GM12878 (cell line): ENCODE measurements at regions of chr11 and their contacts with region 1.

Region 1: DNA sequence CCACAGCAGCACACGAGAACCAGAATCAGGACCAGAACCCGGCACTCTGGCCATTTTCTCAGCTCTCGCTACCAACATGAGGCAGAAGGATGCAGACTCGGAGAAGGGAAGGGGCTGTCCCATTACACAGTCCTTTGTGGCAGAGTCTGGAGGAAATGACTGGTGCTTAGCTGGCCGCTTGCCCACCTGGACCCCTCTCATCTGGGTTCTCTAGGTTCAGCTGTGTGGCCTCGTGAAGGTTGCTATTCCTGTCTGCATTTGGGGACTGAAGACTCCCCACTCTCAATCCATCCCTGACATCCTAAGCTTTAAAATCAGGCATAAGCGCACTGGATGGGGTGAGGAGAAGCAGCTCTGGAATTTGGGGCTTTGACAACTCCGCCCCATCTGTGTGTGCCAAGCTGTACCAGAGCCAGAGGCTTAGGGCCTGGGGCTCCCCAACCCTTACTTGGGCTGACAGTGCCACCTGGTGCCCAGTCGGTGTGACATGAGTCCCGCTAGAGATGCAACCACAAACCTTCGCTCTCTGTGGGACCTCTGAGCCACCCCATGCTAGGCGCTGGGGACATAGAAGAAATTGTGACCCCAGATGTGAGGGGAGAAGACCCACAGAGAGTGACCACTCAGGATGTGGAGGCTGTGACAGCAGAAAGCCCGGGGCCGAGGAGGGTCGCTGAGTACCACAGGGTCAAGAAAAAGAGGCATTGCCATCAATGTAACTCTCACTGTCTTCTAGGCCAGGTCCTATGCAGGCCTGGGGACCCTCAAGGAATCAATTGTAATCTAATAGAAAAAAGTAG is 35.9 kb upstream of the FCHSD2 start:
- DNase-seq: peak; percentile 68
- ATAC-seq: peak; percentile 99
- H3K4me3 ChIP-seq: no peak overlapping the region
- H3K27ac ChIP-seq: peak overlapping the region; percentile 0
- H3K4me1 ChIP-seq: peaks cover 44% of the 10 kb centered on the region
- H3K27me3 ChIP-seq: no peaks in the 10 kb centered on the region
- CTCF ChIP-seq: peak; percentile 82 to 95 (median 91)
- EP300 ChIP-seq: no peak
- POLR2A ChIP-seq: no peak
- RAD21 ChIP-seq: peak; percentile 99

Region 2: GRCh38 chr11:72573072-72573854 is 604.7 kb before region 1 on chr11:
- CTCF ChIA-PET with region 1: no interaction called
- POLR2A ChIA-PET with region 1: no interaction called
- RAD21 ChIA-PET with region 1: no interaction called
- SMC1A ChIA-PET with region 1: no interaction called
- in situ Hi-C with region 1: no loop called
- intact Hi-C with region 1: no loop called
- DNase-seq: no peak
- ATAC-seq: peak; percentile 97
- H3K4me3 ChIP-seq: no peak overlapping the region
- H3K27ac ChIP-seq: no peak overlapping the region
- H3K4me1 ChIP-seq: no peaks in the 10 kb centered on the region
- H3K27me3 ChIP-seq: peaks cover 3% of the 10 kb centered on the region in 2 experiments; a peak in 3 of 4 replicates
- CTCF ChIP-seq: peak; percentile 40 to 82 (median 58)
- EP300 ChIP-seq: no peak
- POLR2A ChIP-seq: no peak
- RAD21 ChIP-seq: peak; percentile 68

Region 3: DNA sequence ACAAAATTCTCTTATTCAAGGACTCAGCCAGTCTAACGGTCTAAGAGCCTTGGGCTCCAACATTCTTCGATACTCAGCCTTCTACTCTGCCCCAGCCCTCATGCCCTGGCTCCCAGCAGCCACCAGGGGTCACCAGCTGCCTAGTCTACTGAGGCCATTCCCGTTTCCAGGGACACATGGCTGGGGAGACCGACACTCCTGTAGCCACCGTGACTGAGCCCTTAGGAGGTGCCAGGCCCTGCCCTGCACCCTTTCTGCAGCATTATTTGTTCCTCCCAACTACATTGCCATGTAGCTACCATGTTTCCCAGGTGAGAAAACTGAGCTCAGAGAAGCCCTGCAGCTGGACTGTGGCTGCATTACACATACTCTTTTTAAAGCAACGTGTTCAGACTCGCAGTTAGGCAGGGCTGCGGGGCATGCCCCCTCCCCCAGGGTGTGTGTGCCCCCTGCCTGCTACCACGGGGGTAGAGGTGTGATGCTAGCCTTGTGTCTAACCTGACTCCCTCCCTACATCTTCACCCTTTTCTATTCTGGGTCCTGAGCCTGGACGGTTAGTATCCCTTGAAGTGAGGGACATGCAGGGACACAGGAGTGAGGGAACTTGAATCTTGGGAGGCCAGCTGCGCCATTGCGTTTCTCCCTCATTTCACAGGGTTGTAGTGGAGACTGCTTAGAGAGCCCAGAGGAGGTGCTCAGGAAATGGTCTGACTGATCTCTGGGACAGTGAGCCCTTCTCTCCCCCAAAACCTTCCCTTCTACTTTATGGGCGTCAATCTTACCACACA is 346.3 kb before region 1 on chr11:
- CTCF ChIA-PET with region 1: interaction called, 128 read pairs
- POLR2A ChIA-PET with region 1: interaction called, 4 read pairs
- RAD21 ChIA-PET with region 1: interaction called, 51 read pairs
- SMC1A ChIA-PET with region 1: interaction called, 65 read pairs
- in situ Hi-C with region 1: loop called (anchors 25 kb)
- intact Hi-C with region 1: loop called (anchors 1 kb)
- DNase-seq: no peak
- ATAC-seq: peak; percentile 83
- H3K4me3 ChIP-seq: no peak overlapping the region
- H3K27ac ChIP-seq: no peak overlapping the region
- H3K4me1 ChIP-seq: peaks cover 8% of the 10 kb centered on the region
- H3K27me3 ChIP-seq: no peaks in the 10 kb centered on the region
- CTCF ChIP-seq: peak; percentile 77 to 85 (median 85); a peak in 5 of 6 replicates
- EP300 ChIP-seq: no peak
- POLR2A ChIP-seq: peak; percentile 69
- RAD21 ChIP-seq: peak; percentile 81

Region 4: GRCh38 chr11:72890881-72891280 is 287.1 kb before region 1 on chr11:
- CTCF ChIA-PET with region 1: interaction called, 5 read pairs
- POLR2A ChIA-PET with region 1: no interaction called
- RAD21 ChIA-PET with region 1: interaction called, 6 read pairs
- SMC1A ChIA-PET with region 1: interaction called, 20 read pairs
- in situ Hi-C with region 1: no loop called
- intact Hi-C with region 1: no loop called
- DNase-seq: no peak
- ATAC-seq: no peak
- H3K4me3 ChIP-seq: no peak overlapping the region
- H3K27ac ChIP-seq: no peak overlapping the region
- H3K4me1 ChIP-seq: no peaks in the 10 kb centered on the region
- H3K27me3 ChIP-seq: no peaks in the 10 kb centered on the region
- CTCF ChIP-seq: no peak
- EP300 ChIP-seq: no peak
- POLR2A ChIP-seq: no peak
- RAD21 ChIP-seq: no peak

Region 5: GRCh38 chr11:73047773-73048371 is 130.1 kb before region 1 on chr11:
- CTCF ChIA-PET with region 1: interaction called, 15 read pairs
- POLR2A ChIA-PET with region 1: interaction called, 4 read pairs
- RAD21 ChIA-PET with region 1: interaction called, 5 read pairs
- SMC1A ChIA-PET with region 1: interaction called, 6 read pairs
- in situ Hi-C with region 1: no loop called
- intact Hi-C with region 1: no loop called
- DNase-seq: peak; percentile 88
- ATAC-seq: peak; percentile 89
- H3K4me3 ChIP-seq: peak overlapping the region; percentile 40; the same call in 1 of the 2 replicates
- H3K27ac ChIP-seq: peak overlapping the region; percentile 95
- H3K4me1 ChIP-seq: peaks cover 44% of the 10 kb centered on the region
- H3K27me3 ChIP-seq: no peaks in the 10 kb centered on the region
- CTCF ChIP-seq: no peak
- EP300 ChIP-seq: peak; percentile 11 to 70; a peak in 1 of 4 replicates
- POLR2A ChIP-seq: 0 out of 2 replicates have a peak, but pooled peaks have one; percentile 29
- RAD21 ChIP-seq: 0 out of 2 replicates have a peak, but pooled peaks have one; percentile 7

Region 6: DNA sequence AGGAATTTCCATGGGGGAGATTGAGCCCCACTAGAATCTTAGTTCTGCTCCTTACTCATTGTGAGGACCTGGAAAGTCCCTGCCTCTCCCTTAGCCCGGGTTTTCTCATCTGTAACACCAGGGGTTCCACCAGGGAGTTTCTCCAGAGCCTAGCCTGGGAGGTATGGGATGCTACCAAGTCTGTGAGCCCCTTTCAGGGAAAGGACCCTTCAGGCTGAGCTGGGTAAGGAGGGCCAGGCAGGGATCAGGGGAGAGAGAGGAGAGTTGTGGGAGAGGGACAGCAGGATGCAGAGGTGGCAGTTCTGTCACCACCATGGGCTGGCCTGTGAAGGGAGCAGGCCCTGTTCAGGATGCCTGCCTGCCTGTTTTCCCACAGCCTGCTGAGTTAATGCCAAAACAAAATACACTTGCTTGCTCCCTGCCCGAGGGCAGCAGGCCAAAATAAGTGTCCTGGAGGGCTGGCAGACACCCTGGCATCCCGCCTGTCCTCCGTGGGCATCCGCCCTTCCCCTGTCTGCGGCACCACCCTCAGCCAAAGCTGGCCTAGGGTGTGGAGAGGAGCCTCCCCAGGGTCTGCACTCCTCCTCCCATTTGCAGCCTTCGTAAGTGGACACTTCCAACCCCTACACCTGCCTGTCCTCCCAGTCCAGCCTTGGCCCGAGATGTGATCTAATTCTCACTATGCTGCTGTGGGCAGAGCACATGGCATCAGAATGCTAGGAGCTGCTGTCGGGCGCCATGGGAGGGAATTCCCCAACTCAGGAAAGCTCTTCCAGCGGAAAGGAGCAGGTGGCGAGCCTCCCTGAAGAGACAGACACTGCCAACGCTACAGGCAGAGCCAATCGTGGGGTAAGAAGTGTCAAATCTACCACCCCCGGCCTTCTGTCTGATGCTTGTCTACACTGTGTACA is 30.0 kb before region 1 on chr11:
- CTCF ChIA-PET with region 1: interaction called, 98 read pairs
- POLR2A ChIA-PET with region 1: interaction called, 9 read pairs
- RAD21 ChIA-PET with region 1: interaction called, 93 read pairs
- SMC1A ChIA-PET with region 1: interaction called, 926 read pairs
- in situ Hi-C with region 1: no loop called
- intact Hi-C with region 1: no loop called
- DNase-seq: no peak
- ATAC-seq: peak; percentile 35
- H3K4me3 ChIP-seq: no peak overlapping the region
- H3K27ac ChIP-seq: peak overlapping the region; percentile 80
- H3K4me1 ChIP-seq: peaks cover 85% of the 10 kb centered on the region
- H3K27me3 ChIP-seq: no peaks in the 10 kb centered on the region
- CTCF ChIP-seq: no peak
- EP300 ChIP-seq: peak; percentile 32 to 60; a peak in 1 of 4 replicates
- POLR2A ChIP-seq: no peak
- RAD21 ChIP-seq: no peak

Region 7: GRCh38 chr11:73236854-73237253 is 58.9 kb after region 1 on chr11:
- CTCF ChIA-PET with region 1: interaction called, 160 read pairs
- POLR2A ChIA-PET with region 1: no interaction called
- RAD21 ChIA-PET with region 1: interaction called, 115 read pairs
- SMC1A ChIA-PET with region 1: interaction called, 188 read pairs
- in situ Hi-C with region 1: no loop called
- intact Hi-C with region 1: no loop called
- DNase-seq: no peak
- ATAC-seq: peak; percentile 84
- H3K4me3 ChIP-seq: no peak overlapping the region
- H3K27ac ChIP-seq: no peak overlapping the region
- H3K4me1 ChIP-seq: peaks cover 2% of the 10 kb centered on the region
- H3K27me3 ChIP-seq: no peaks in the 10 kb centered on the region
- CTCF ChIP-seq: peak; percentile 69 to 82 (median 72)
- EP300 ChIP-seq: no peak
- POLR2A ChIP-seq: no peak
- RAD21 ChIP-seq: peak; percentile 76